Left ventricle myocardium inferior (tissue), 1 donor: ENCODE measurements at regions of chr10 and their contacts with region 1.

Region 1: DNA sequence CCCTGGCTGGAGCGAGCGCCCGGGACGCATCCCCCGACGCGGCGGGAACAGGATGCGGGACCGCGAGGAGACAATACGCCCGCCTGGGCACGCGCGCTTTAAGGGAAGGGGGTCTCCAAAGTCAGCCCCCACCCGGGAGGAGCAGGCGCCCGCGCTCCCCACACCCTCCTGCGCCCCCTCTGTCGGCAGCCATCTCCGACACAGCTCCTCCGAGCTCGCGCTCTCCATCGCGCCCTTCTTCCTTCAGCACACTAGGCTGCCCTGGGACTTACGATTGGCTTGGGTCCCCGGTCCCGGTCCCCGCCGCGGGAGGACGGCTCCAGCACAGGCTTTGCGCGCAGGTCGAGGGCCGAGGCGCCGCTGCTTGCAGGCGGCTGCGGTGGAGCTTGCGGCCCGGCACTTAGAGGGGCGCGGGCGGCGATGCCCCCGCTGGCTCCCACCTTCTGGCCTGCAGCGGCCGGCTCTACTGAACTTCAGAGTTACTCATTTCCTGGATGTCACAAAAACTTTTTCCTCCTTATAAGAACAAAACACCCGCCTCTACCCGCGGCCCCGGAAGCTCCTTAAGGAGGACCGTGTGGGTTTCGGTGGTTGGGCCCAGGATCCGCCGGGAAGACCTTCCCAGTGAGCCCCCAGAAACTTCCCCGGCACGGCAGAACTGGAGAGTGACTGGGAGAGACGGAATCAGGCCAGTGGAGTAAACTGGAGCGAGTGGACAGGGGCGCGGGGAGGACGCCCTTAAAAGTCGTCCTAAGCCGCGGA is at the start of gene ITPRIP:
- DNase-seq: peak; percentile 74
- H3K4me3 ChIP-seq: peak within 1 kb of the TSS; percentile 97
- H3K27ac ChIP-seq: peak within 1 kb of the TSS; percentile 99
- H3K4me1 ChIP-seq: peaks cover 86% of the 10 kb centered on the region
- H3K27me3 ChIP-seq: no peaks in the 10 kb centered on the region
- CTCF ChIP-seq: peak; percentile 43
- total RNA-seq, gene ITPRIP: 35.4 TPM

Region 2: GRCh38 chr10:104016661-104017060 is 321.5 kb before region 1 on chr10:
- intact Hi-C with region 1: no loop called
- DNase-seq: no peak
- H3K4me3 ChIP-seq: no peak overlapping the region
- H3K27ac ChIP-seq: no peak overlapping the region
- H3K4me1 ChIP-seq: no peaks in the 10 kb centered on the region
- H3K27me3 ChIP-seq: no peaks in the 10 kb centered on the region
- CTCF ChIP-seq: no peak

Region 3: GRCh38 chr10:104288358-104288757 is 49.8 kb before region 1 on chr10:
- intact Hi-C with region 1: no loop called
- DNase-seq: no peak
- H3K4me3 ChIP-seq: no peak overlapping the region
- H3K27ac ChIP-seq: no peak overlapping the region
- H3K4me1 ChIP-seq: peaks cover 21% of the 10 kb centered on the region
- H3K27me3 ChIP-seq: no peaks in the 10 kb centered on the region
- CTCF ChIP-seq: no peak

Region 4: DNA sequence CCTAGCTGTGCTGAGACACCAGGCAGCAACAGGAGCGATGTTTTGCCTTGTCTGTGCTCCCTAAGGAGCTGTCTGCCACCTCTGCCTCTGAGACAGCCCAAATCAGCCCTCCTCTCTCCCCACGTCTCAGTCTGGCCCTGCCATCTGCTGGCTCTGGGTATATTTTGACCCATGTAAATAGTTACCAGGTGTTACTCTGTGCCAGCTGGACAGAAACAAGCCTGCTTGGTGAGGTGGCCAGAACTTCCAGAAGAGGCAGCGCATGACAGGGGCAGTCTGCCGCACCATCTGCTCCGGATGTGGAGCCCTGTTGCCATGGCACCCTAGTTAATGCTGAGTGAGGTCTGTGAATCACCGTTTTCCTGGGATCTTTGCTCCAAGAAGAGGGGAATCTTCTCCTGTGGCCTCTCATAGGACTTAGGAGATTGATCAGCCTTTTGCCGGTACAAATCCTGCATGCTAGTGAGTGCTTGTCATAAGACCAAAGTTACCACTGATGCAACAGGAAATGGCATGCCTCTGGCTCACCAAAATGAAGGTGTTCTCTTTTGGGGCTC is 37.3 kb before region 1 on chr10:
- intact Hi-C with region 1: loop called (anchors 5 kb)
- DNase-seq: peak; percentile 75
- H3K4me3 ChIP-seq: peak overlapping the region; percentile 31
- H3K27ac ChIP-seq: peak overlapping the region; percentile 94
- H3K4me1 ChIP-seq: peaks cover 85% of the 10 kb centered on the region
- H3K27me3 ChIP-seq: no peaks in the 10 kb centered on the region
- CTCF ChIP-seq: no peak

Region 5: GRCh38 chr10:104391150-104391968 is 53.2 kb after region 1 on chr10:
- intact Hi-C with region 1: no loop called
- DNase-seq: no peak
- H3K4me3 ChIP-seq: no peak overlapping the region
- H3K27ac ChIP-seq: no peak overlapping the region
- H3K4me1 ChIP-seq: peaks cover 8% of the 10 kb centered on the region
- H3K27me3 ChIP-seq: no peaks in the 10 kb centered on the region
- CTCF ChIP-seq: no peak

Region 6: GRCh38 chr10:104417637-104418296 is 79.6 kb after region 1 on chr10:
- intact Hi-C with region 1: no loop called
- DNase-seq: no peak
- H3K4me3 ChIP-seq: no peak overlapping the region
- H3K27ac ChIP-seq: no peak overlapping the region
- H3K4me1 ChIP-seq: no peaks in the 10 kb centered on the region
- H3K27me3 ChIP-seq: no peaks in the 10 kb centered on the region
- CTCF ChIP-seq: no peak